GM12878 (cell line): ENCODE measurements at regions of chr6 and their contacts with region 1.

Region 1: DNA sequence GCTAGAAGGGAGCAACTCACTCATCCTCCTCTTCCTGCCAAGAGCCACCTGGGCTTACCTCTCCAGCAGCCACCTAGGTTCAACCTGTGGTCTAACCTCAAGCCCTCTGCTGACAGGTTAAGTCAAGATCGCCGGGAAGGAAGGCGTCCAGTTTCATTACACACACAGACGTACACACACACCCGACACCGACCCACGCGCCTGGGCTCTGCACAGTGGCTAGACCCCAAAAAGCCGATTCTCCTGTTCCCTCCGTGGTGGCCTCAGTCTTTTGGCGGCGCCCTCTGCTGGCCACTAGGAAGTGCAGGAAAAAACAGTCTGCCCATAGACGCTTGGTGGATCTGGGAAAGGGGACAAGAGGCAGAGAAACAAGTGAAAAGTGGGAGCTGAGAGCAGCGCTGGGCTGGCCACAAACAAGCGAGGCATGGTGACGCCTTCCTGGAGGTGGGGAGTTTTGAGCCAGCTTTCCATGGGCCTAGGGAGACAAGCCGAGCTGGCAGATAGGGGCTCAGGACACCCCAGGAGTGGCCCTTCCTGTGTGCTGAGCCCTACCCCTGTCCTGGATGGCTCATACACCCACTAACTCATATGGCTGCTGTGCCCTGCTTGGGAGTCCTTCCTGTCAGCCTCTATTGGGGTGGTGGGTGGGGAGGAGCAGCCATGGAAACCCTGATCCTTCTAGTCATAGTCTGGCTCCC is 52.7 kb downstream of the MRPL14 start:
- DNase-seq: peak; percentile 75
- ATAC-seq: peak; percentile 71
- H3K4me3 ChIP-seq: peak overlapping the region; percentile 92
- H3K27ac ChIP-seq: peak overlapping the region; percentile 85
- H3K4me1 ChIP-seq: peaks cover 52% of the 10 kb centered on the region
- H3K27me3 ChIP-seq: no peaks in the 10 kb centered on the region
- CTCF ChIP-seq: peak; percentile 87 to 91 (median 89)
- EP300 ChIP-seq: peak; percentile 36 to 44; a peak in 1 of 4 replicates
- POLR2A ChIP-seq: no peak; the same call in 1 of the 2 replicates
- RAD21 ChIP-seq: peak; percentile 78

Region 2: DNA sequence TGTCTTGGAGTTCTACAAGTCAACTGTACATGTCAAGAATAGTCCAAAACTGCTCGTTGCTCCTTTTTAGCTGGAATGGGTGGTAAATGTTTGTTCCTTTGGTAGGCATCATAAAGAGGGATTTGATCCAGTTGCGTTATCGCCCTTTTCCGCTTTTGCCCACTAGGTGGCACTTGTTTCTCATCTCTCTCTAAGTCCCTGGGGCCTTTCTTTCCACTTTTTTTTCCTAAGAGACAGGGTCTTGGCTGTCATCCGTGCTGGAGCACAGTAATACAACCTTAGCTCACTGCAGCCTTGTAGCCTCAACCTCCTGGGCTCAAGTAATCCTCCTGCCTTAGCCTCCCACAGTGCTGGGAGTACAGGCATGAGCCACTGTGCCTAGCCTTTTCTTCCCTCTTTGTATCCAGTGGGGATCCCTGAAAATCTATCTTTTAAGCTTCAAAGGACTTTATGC is 466.3 kb before region 1 on chr6:
- CTCF ChIA-PET with region 1: interaction called, 42 read pairs
- POLR2A ChIA-PET with region 1: no interaction called
- RAD21 ChIA-PET with region 1: interaction called, 5 read pairs
- SMC1A ChIA-PET with region 1: no interaction called
- in situ Hi-C with region 1: no loop called
- intact Hi-C with region 1: loop called (anchors 1 kb)
- DNase-seq: peak; percentile 17
- ATAC-seq: peak; percentile 74
- H3K4me3 ChIP-seq: no peak overlapping the region
- H3K27ac ChIP-seq: no peak overlapping the region
- H3K4me1 ChIP-seq: no peaks in the 10 kb centered on the region
- H3K27me3 ChIP-seq: no peaks in the 10 kb centered on the region
- CTCF ChIP-seq: peak; percentile 74 to 84 (median 78)
- EP300 ChIP-seq: no peak
- POLR2A ChIP-seq: no peak
- RAD21 ChIP-seq: peak; percentile 61

Region 3: GRCh38 chr6:43714311-43715055 is 360.1 kb before region 1 on chr6:
- CTCF ChIA-PET with region 1: interaction called, 16 read pairs
- POLR2A ChIA-PET with region 1: no interaction called
- RAD21 ChIA-PET with region 1: interaction called, 3 read pairs
- SMC1A ChIA-PET with region 1: interaction called, 5 read pairs
- in situ Hi-C with region 1: no loop called
- intact Hi-C with region 1: no loop called
- DNase-seq: no peak
- ATAC-seq: peak; percentile 54
- H3K4me3 ChIP-seq: peak overlapping the region; percentile 41
- H3K27ac ChIP-seq: peak overlapping the region; percentile 75
- H3K4me1 ChIP-seq: peaks cover 33% of the 10 kb centered on the region
- H3K27me3 ChIP-seq: no peaks in the 10 kb centered on the region
- CTCF ChIP-seq: no peak
- EP300 ChIP-seq: no peak
- POLR2A ChIP-seq: no peak
- RAD21 ChIP-seq: no peak

Region 4: GRCh38 chr6:43764721-43765120 is 309.9 kb before region 1 on chr6:
- CTCF ChIA-PET with region 1: interaction called, 264 read pairs
- POLR2A ChIA-PET with region 1: interaction called, 97 read pairs
- RAD21 ChIA-PET with region 1: interaction called, 179 read pairs
- SMC1A ChIA-PET with region 1: interaction called, 78 read pairs
- in situ Hi-C with region 1: no loop called
- intact Hi-C with region 1: loop called (anchors 1 kb)
- DNase-seq: no peak
- ATAC-seq: no peak
- H3K4me3 ChIP-seq: no peak overlapping the region
- H3K27ac ChIP-seq: no peak overlapping the region
- H3K4me1 ChIP-seq: peaks cover 5% of the 10 kb centered on the region
- H3K27me3 ChIP-seq: no peaks in the 10 kb centered on the region
- CTCF ChIP-seq: no peak
- EP300 ChIP-seq: no peak
- POLR2A ChIP-seq: no peak
- RAD21 ChIP-seq: no peak

Region 5: DNA sequence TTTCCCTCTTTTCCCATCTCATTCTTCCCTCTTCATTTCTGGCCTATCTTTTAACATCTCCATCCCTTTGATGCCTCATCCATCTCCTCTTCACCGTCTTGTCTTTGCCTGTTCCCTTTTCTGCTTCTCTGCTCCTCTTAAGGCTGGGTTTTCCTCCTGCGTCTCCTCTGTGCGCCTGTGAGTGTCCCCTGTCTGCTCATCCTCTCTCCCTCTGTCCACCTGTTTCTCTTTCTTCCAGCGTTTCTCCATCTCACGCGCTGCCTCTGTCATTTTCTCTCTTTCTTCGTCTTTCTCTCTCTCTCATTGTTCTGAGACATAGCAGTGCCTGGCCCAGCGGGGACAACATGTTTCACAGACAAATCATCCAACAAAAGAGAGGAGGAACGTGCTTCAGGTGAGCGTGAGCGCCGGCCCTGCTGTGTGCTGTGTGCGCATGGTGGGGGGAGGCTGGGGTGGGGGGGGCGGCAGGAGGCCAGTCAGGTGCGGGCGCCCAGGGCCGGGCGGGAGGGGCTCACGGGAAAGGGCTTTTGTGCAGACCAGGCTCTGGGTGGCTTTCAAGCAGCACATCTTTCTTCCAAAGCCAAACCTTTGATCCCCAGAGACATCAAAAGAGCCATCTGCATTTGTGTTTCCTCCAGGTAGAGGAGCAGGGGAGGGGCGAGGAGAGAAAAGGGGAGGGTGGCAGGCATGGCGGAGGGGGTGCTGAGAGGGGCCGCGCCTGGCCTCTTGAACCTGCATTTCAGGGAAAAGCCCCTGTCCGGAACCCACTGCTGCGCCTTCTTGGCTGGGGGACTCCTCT is 183.3 kb before region 1 on chr6:
- CTCF ChIA-PET with region 1: no interaction called
- POLR2A ChIA-PET with region 1: no interaction called
- RAD21 ChIA-PET with region 1: no interaction called
- SMC1A ChIA-PET with region 1: no interaction called
- in situ Hi-C with region 1: no loop called
- intact Hi-C with region 1: no loop called
- DNase-seq: no peak
- ATAC-seq: no peak
- H3K4me3 ChIP-seq: no peak overlapping the region
- H3K27ac ChIP-seq: no peak overlapping the region
- H3K4me1 ChIP-seq: peaks cover 4% of the 10 kb centered on the region; the same call in 1 of the 2 replicates
- H3K27me3 ChIP-seq: no peaks in the 10 kb centered on the region; a peak in 1 of 4 replicates
- CTCF ChIP-seq: no peak
- EP300 ChIP-seq: no peak
- POLR2A ChIP-seq: no peak
- RAD21 ChIP-seq: no peak

Region 6: GRCh38 chr6:44002593-44003344 is 71.8 kb before region 1 on chr6:
- CTCF ChIA-PET with region 1: interaction called, 32 read pairs
- POLR2A ChIA-PET with region 1: interaction called, 74 read pairs
- RAD21 ChIA-PET with region 1: interaction called, 138 read pairs
- SMC1A ChIA-PET with region 1: interaction called, 23 read pairs
- in situ Hi-C with region 1: no loop called
- intact Hi-C with region 1: loop called (anchors 2 kb)
- DNase-seq: no peak
- ATAC-seq: peak; percentile 28
- H3K4me3 ChIP-seq: peak overlapping the region; percentile 49
- H3K27ac ChIP-seq: no peak overlapping the region; the same call in 1 of the 2 replicates
- H3K4me1 ChIP-seq: peaks cover 20% of the 10 kb centered on the region
- H3K27me3 ChIP-seq: peaks cover 0 to 4% of the 10 kb centered on the region in 2 experiments; a peak in 2 of 4 replicates
- CTCF ChIP-seq: peak in 2 of 3 experiments; percentile 4 to 53; a peak in 3 of 6 replicates
- EP300 ChIP-seq: no peak; a peak in 1 of 4 replicates
- POLR2A ChIP-seq: no peak
- RAD21 ChIP-seq: 0 out of 2 replicates have a peak, but pooled peaks have one; percentile 8

Region 7: GRCh38 chr6:44064089-44064947 is 10.3 kb before region 1 on chr6:
- CTCF ChIA-PET with region 1: interaction called, 50 read pairs
- POLR2A ChIA-PET with region 1: interaction called, 13 read pairs
- RAD21 ChIA-PET with region 1: interaction called, 9 read pairs
- SMC1A ChIA-PET with region 1: interaction called, 8 read pairs
- in situ Hi-C with region 1: no loop called
- intact Hi-C with region 1: no loop called
- DNase-seq: no peak
- ATAC-seq: peak; percentile 77
- H3K4me3 ChIP-seq: no peak overlapping the region
- H3K27ac ChIP-seq: no peak overlapping the region
- H3K4me1 ChIP-seq: peaks cover 44% of the 10 kb centered on the region
- H3K27me3 ChIP-seq: no peaks in the 10 kb centered on the region
- CTCF ChIP-seq: no peak
- EP300 ChIP-seq: no peak
- POLR2A ChIP-seq: no peak
- RAD21 ChIP-seq: no peak